HepG2 (cell line): ENCODE measurements at regions of chr10 and their contacts with region 1.

Region 1: DNA sequence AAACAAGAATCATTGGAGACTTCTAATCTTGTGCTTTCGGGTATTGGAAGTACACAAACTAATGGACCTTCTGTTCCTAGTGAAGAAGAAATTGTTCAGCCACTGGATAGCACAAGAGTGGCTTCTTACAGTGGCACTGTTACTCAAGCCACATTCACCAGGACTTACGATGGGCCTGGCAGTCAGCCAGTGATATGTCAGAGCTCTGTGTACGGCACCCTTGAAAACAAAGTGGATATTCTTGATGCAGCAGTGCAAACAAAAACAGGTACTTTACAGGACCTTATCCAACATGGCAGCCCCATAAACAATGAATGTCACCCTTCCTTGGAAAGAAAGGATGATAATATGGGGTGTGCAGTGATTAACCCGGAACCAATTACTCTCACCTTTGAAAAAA is 61.6 kb downstream of the TASOR2 start:
- DNase-seq: no peak
- ATAC-seq: no peak
- H3K4me3 ChIP-seq: no peak overlapping the region
- H3K27ac ChIP-seq: no peak overlapping the region
- H3K4me1 ChIP-seq: peaks cover 42% of the 10 kb centered on the region
- H3K27me3 ChIP-seq: no peaks in the 10 kb centered on the region
- CTCF ChIP-seq: no peak
- EP300 ChIP-seq: no peak
- POLR2A ChIP-seq: no peak
- RAD21 ChIP-seq: no peak

Region 2: GRCh38 chr10:5692461-5693358 is 53.5 kb before region 1 on chr10:
- CTCF ChIA-PET with region 1: no interaction called
- POLR2A ChIA-PET with region 1: interaction called, 4 read pairs
- in situ Hi-C with region 1: no loop called
- intact Hi-C with region 1: loop called (anchors 5 kb)
- DNase-seq: peak; percentile 82
- ATAC-seq: peak; percentile 95
- H3K4me3 ChIP-seq: peak overlapping the region; percentile 67 to 88 (median 76)
- H3K27ac ChIP-seq: peak overlapping the region; percentile 93
- H3K4me1 ChIP-seq: peaks cover 64% of the 10 kb centered on the region
- H3K27me3 ChIP-seq: no peaks in the 10 kb centered on the region
- CTCF ChIP-seq: peak; percentile 24
- EP300 ChIP-seq: peak; percentile 11 to 26; a peak in 1 of 4 replicates
- POLR2A ChIP-seq: peak; percentile 50 to 73
- RAD21 ChIP-seq: peak; percentile 34; the same call in 1 of the 2 replicates

Region 3: GRCh38 chr10:5889624-5890451 is 143.6 kb after region 1 on chr10 and contains the starts of genes ANKRD16 and FBH1:
- CTCF ChIA-PET with region 1: no interaction called
- POLR2A ChIA-PET with region 1: no interaction called
- in situ Hi-C with region 1: no loop called
- intact Hi-C with region 1: no loop called
- DNase-seq: peak; percentile 93
- ATAC-seq: peak; percentile 91
- H3K4me3 ChIP-seq: peak within 1 kb of the TSS; percentile 79 to 94 (median 85)
- H3K27ac ChIP-seq: peak within 1 kb of the TSS; percentile 84
- H3K4me1 ChIP-seq: peaks cover 55% of the 10 kb centered on the region
- H3K27me3 ChIP-seq: no peaks in the 10 kb centered on the region; a peak in 1 of 5 replicates
- CTCF ChIP-seq: no peak
- EP300 ChIP-seq: no peak
- POLR2A ChIP-seq: peak; percentile 90 to 97
- RAD21 ChIP-seq: peak; percentile 59; the same call in 1 of the 2 replicates
- total RNA-seq, gene ANKRD16: 5.4 and 8.0 TPM in 2 replicates
- total RNA-seq, gene FBH1: 53.3 and 60.3 TPM in 2 replicates